ENCODE measurements at regions of chr10 and their contacts with region 1.

Region 1: GRCh38 chr10:26780793-26781601 is 79.8 kb downstream of the ABI1 start:
- DNase-seq: no peak
- ATAC-seq: peak; percentile 76
- H3K4me3 ChIP-seq: no peak overlapping the region
- H3K4me3 Mint-ChIP-seq: peak overlapping the region in 5 of 10 donors; percentile 6 to 38 (median 26)
- H3K27ac ChIP-seq: no peak overlapping the region
- H3K27ac Mint-ChIP-seq: peak overlapping the region in 6 of 9 donors; percentile 6 to 83 (median 60)
- H3K4me1 ChIP-seq: peaks cover 15 to 29% of the 10 kb centered on the region in 2 donors
- H3K4me1 Mint-ChIP-seq: peaks cover 53 to 98% (median 91%) of the 10 kb centered on the region in 7 donors
- H3K27me3 ChIP-seq: no peaks in the 10 kb centered on the region
- H3K27me3 Mint-ChIP-seq: no peaks in the 10 kb centered on the region

Region 2: GRCh38 chr10:26770069-26770468 is 10.9 kb before region 1 on chr10:
- CTCF ChIA-PET with region 1: no interaction called
- POLR2A ChIA-PET with region 1: no interaction called
- intact Hi-C with region 1: loop called in 1 of 2 experiments (anchors 2 kb)
- DNase-seq: no peak
- ATAC-seq: no peak
- H3K4me3 ChIP-seq: no peak overlapping the region
- H3K4me3 Mint-ChIP-seq: no peak overlapping the region
- H3K27ac ChIP-seq: no peak overlapping the region
- H3K27ac Mint-ChIP-seq: no peak overlapping the region
- H3K4me1 ChIP-seq: no peaks in the 10 kb centered on the region
- H3K4me1 Mint-ChIP-seq: peaks cover 11 to 53% (median 42%) of the 10 kb centered on the region in 7 donors
- H3K27me3 ChIP-seq: no peaks in the 10 kb centered on the region
- H3K27me3 Mint-ChIP-seq: no peaks in the 10 kb centered on the region